B cell (primary cell): ENCODE measurements at regions of chr9 and their contacts with region 1.

Region 1: DNA sequence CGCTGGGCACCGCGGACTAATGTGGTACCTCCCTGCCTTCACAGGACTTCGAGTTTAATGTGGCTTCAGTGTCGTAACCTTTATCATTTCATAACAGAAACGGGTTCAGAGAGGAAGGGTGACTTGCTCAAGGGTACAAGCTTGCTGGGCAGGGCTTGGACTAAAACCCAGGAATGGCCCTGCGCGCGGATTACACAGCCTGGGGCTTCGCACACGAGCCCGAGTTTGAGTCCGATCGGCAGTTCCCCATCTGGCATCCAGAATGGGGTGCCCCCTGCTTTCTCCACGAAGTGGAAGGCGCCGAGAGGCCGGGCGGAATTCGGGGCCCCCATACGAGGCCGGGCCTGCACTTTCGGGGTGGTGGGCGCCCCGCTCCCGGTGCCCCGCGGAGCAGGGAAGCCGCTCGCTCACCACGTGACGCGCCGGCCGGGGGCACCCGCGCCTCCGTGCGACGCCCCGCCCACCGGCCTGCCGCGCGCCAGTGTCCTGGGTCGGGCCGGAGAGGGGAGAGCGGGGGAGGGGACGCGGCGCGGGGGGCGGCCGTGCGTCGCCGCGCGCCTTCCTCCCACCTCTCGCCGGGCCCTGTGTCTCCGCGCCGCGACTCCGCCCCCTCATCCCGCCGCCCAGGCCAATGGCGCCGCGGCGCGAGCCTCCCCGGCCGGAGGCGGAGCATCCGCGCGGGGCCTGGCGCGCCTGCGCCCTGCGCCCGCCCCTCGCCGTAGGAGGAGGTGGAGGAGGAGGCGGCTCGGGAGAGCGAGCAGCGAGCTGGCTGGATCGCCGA is at the start of gene SET:
- DNase-seq: peak; percentile 97
- ATAC-seq: peak; percentile 81
- H3K4me3 ChIP-seq: peak within 1 kb of the TSS; percentile 57 to 81 (median 70)
- H3K4me3 Mint-ChIP-seq: peak within 1 kb of the TSS; percentile 89
- H3K27ac ChIP-seq: peak within 1 kb of the TSS; percentile 89 to 91
- H3K27ac Mint-ChIP-seq: peak within 1 kb of the TSS; percentile 95
- H3K4me1 ChIP-seq: peaks cover 47 to 57% of the 10 kb centered on the region in 2 donors
- H3K4me1 Mint-ChIP-seq: peaks cover 60% of the 10 kb centered on the region
- H3K27me3 ChIP-seq: no peaks in the 10 kb centered on the region
- H3K27me3 Mint-ChIP-seq: no peaks in the 10 kb centered on the region
- CTCF ChIP-seq: no peak
- total RNA-seq, gene SET: 306 and 309 TPM in 2 replicates

Region 2: DNA sequence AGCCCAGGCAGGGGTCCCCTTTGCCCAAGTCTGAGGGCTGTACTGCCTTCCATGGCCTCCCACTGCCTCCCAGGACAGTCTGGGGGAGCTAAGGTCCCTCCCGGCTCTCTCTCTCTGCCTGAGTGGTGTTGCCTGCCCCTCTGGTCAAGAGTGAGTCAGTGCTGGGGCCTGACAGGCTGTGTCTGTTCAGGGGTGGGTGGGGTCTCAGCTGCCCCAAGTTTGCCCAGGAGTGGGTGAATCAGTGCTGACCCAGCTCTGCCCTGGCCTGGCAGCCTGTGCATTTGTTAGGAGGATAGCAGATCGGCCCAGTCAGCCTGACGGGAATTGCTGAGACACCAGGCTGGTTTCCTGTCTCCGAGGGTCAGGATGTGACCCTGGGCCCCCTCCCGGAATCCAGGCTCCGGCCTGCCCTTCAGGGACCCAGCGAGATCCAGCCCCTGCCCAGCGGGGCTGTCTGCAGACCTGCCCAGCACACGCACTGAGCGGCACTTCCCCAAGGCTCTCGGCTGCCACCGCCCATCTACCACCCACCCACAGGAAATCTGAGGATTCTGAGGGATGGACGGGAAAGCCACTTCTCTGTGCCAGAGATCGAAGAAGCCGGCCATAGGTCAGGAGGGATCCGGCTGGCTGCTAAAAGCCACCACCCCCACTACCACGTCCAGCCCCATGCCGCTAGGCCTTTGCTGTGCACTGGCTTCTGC is 850.2 kb before region 1 on chr9:
- CTCF ChIA-PET with region 1: no interaction called
- POLR2A ChIA-PET with region 1: no interaction called
- intact Hi-C with region 1: no loop called
- DNase-seq: no peak
- ATAC-seq: no peak
- H3K4me3 ChIP-seq: no peak overlapping the region
- H3K4me3 Mint-ChIP-seq: no peak overlapping the region
- H3K27ac ChIP-seq: no peak overlapping the region
- H3K27ac Mint-ChIP-seq: no peak overlapping the region
- H3K4me1 ChIP-seq: peaks cover 5 to 12% of the 10 kb centered on the region in 2 donors
- H3K4me1 Mint-ChIP-seq: peaks cover 4% of the 10 kb centered on the region
- H3K27me3 ChIP-seq: no peaks in the 10 kb centered on the region
- H3K27me3 Mint-ChIP-seq: no peaks in the 10 kb centered on the region
- CTCF ChIP-seq: no peak

Region 3: DNA sequence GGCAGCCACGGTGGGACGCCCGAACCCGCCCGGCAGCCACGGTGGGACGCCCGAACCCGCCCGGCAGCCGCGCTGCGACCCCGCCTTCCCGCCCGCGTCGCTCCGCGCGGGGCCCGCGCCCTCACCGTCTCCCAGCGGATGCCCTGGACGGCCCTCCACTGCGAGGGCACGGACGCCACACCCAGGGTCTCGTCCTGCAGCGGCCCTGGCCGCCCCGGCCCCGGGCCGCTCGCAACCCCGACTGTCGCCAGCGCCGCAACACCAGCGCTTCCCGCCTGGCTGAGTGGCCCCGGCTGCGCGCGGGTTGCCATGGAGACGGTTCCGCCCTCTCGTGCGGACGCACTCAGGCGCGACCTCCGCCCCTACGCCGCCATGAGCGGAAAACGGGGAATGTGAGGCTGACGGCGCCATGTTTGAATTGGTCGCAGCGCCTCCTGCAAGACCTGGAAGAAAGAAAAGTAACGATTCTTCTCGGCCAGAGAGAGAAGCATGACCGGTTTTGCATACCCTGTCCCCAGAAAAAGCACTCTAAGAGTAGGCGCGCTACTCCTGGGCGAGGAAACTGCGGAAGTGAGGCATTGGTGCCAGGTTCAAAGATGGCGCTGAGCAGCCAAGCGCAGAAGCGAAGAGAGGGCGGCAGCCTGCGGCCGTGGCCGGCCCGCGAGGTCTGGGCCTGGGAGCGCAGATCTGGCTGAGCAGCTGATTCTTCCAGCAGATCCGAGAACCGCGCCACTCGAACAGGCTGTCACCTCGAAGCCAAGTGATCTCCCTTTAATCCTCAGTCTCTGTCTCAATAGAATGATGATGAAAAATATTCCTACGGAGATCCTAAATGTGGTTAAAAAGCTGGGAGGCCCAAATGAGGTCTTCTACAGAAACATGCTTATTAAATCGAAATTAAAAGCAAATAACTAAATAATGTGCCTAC is 32.0 kb before region 1 on chr9 and contains the start of gene DYNC2I2:
- CTCF ChIA-PET with region 1: interaction called, 3 read pairs
- POLR2A ChIA-PET with region 1: interaction called, 8 read pairs
- intact Hi-C with region 1: loop called (anchors 1 kb)
- DNase-seq: peak; percentile 90
- ATAC-seq: peak; percentile 80
- H3K4me3 ChIP-seq: peak within 1 kb of the TSS; percentile 66 to 97 (median 89)
- H3K4me3 Mint-ChIP-seq: peak within 1 kb of the TSS; percentile 96
- H3K27ac ChIP-seq: peak within 1 kb of the TSS; percentile 92 to 95
- H3K27ac Mint-ChIP-seq: peak within 1 kb of the TSS; percentile 100
- H3K4me1 ChIP-seq: peaks cover 2 to 14% of the 10 kb centered on the region in 2 donors
- H3K4me1 Mint-ChIP-seq: peaks cover 13% of the 10 kb centered on the region
- H3K27me3 ChIP-seq: no peaks in the 10 kb centered on the region
- H3K27me3 Mint-ChIP-seq: no peaks in the 10 kb centered on the region
- CTCF ChIP-seq: no peak
- total RNA-seq, gene DYNC2I2: 76.6 and 83.4 TPM in 2 replicates

Region 4: GRCh38 chr9:128723866-128724743 is 35.4 kb after region 1 on chr9 and contains the start of gene ZDHHC12:
- CTCF ChIA-PET with region 1: interaction called, 4 read pairs
- POLR2A ChIA-PET with region 1: interaction called, 6 read pairs
- intact Hi-C with region 1: loop called (anchors 1 kb)
- DNase-seq: peak; percentile 99
- ATAC-seq: peak; percentile 97
- H3K4me3 ChIP-seq: peak within 1 kb of the TSS; percentile 62 to 96 (median 92)
- H3K4me3 Mint-ChIP-seq: peak within 1 kb of the TSS; percentile 97
- H3K27ac ChIP-seq: peak within 1 kb of the TSS; percentile 66 to 82
- H3K27ac Mint-ChIP-seq: peak within 1 kb of the TSS; percentile 91
- H3K4me1 ChIP-seq: peaks cover 18 to 23% of the 10 kb centered on the region in 2 donors
- H3K4me1 Mint-ChIP-seq: peaks cover 31% of the 10 kb centered on the region
- H3K27me3 ChIP-seq: no peaks in the 10 kb centered on the region
- H3K27me3 Mint-ChIP-seq: no peaks in the 10 kb centered on the region
- CTCF ChIP-seq: no peak
- total RNA-seq, gene ZDHHC12: 25.3 and 28.5 TPM in 2 replicates

Region 5: DNA sequence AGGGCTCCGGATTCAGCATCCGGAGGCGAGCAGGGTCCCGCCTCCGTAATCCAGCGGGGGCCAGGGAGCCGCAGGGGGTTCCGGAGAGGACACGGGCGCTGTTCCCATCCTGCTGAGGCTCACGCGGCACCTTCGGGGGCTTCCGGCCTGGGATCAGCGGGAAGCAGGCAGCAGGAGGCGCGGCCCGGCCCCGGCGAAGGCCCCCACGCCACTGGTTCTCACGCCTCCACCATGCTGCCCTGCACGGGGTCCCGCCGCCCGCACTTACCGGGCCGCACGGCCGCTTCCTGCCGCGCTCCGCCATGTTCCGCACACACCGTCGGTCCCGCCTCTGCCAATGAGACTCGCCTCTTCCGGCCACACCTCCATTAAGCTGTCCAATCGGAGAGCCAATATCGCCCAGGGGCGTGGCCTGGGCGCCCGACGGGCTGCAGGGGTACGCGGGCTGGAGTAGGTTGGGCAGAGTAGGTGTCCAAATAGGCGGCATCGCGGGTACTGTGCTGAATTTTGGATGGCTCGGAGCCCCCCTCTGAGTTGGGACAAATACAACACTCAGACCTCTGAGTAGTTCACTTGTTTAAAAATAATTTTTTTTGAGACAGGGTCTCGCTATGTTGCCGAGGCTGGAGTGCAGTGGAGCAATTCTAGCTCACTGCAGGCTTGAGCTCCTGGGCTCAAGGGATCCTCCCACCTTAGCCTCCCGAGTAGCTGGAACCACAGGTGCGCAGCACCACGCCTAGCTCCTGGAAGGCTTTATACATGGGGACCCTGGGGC is 141.0 kb after region 1 on chr9 and contains the start of gene SPOUT1:
- CTCF ChIA-PET with region 1: no interaction called
- POLR2A ChIA-PET with region 1: no interaction called
- intact Hi-C with region 1: loop called (anchors 1 kb)
- DNase-seq: peak; percentile 95
- ATAC-seq: peak; percentile 99
- H3K4me3 ChIP-seq: peak within 1 kb of the TSS; percentile 43 to 97 (median 91)
- H3K4me3 Mint-ChIP-seq: peak within 1 kb of the TSS; percentile 97
- H3K27ac ChIP-seq: peak within 1 kb of the TSS; percentile 42 to 74
- H3K27ac Mint-ChIP-seq: peak within 1 kb of the TSS; percentile 95
- H3K4me1 ChIP-seq: peaks cover 12 to 17% of the 10 kb centered on the region in 2 donors
- H3K4me1 Mint-ChIP-seq: peaks cover 19% of the 10 kb centered on the region
- H3K27me3 ChIP-seq: no peaks in the 10 kb centered on the region
- H3K27me3 Mint-ChIP-seq: no peaks in the 10 kb centered on the region
- CTCF ChIP-seq: no peak
- total RNA-seq, gene SPOUT1: 70.0 and 73.0 TPM in 2 replicates